K562 (cell line): ENCODE measurements at regions of chr1 and their contacts with region 1.

Region 1: GRCh38 chr1:36187800-36188593 is 32.0 kb downstream of the MAP7D1 start:
- DNase-seq: peak; percentile 75 to 90 (median 82)
- ATAC-seq: peak; percentile 98
- H3K4me3 ChIP-seq: no peak overlapping the region
- H3K27ac ChIP-seq: peak overlapping the region; percentile 6; the same call in 1 of the 3 replicates
- H3K4me1 ChIP-seq: peaks cover 5 to 6% of the 10 kb centered on the region in 2 experiments; a peak in 3 of 5 replicates
- H3K27me3 ChIP-seq: no peaks in the 10 kb centered on the region
- CTCF ChIP-seq: peak; percentile 95 to 97 (median 97)
- EP300 ChIP-seq: no peak; the same call in 1 of the 2 replicates
- POLR2A ChIP-seq: no peak
- RAD21 ChIP-seq: peak; percentile 97 to 99

Region 2: DNA sequence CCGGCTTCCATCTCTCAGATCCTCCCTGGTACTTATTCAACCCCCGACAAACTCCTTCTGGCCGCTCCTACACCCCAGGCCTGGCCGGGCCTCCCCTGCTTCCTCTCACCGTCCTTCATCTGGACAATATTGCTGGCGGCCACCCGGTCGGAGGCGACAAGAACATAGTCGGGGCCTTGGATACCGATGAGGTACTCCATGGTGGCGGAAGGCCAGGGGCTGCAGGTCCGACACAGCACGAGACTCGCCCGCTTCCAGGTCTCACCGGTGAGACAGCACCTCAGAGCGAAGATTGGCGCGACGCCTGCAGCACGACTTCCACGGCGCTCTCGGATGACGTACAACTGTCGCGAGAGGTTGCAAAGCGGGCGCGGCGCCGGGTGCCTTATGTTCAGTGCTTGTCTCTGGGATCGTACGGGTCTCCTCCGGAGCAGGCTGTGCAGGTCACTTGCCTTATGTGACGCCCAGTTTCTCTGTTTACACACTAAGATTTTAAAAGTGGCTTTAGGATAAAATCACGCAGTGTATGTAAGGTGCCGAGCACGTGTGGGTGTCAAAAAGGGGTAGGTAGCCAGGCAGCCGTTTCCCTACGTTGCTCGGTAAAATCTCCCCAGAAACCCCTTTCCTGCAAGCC is 546.6 kb before region 1 on chr1 and contains the start of gene PSMB2:
- CTCF ChIA-PET with region 1: no interaction called
- POLR2A ChIA-PET with region 1: no interaction called
- in situ Hi-C with region 1: no loop called
- intact Hi-C with region 1: no loop called
- DNase-seq: peak; percentile 91 to 100 (median 92)
- ATAC-seq: peak; percentile 84
- H3K4me3 ChIP-seq: peak within 1 kb of the TSS; percentile 72
- H3K27ac ChIP-seq: peak within 1 kb of the TSS; percentile 94
- H3K4me1 ChIP-seq: peaks cover 0 to 7% of the 10 kb centered on the region in 2 experiments; a peak in 1 of 5 replicates
- H3K27me3 ChIP-seq: 0 out of 5 replicates have a peak, but pooled peaks cover 0 to 6% of the 10 kb centered on the region in 2 experiments
- CTCF ChIP-seq: peak in 1 of 3 experiments; percentile 14; a peak in 1 of 6 replicates
- EP300 ChIP-seq: peak; percentile 56; the same call in 1 of the 2 replicates
- POLR2A ChIP-seq: peak; percentile 98
- RAD21 ChIP-seq: no peak
- polyA plus RNA-seq, gene PSMB2: 499 to 543 TPM

Region 3: GRCh38 chr1:36088575-36089443 is 99.2 kb before region 1 on chr1 and contains the start of gene ADPRS:
- CTCF ChIA-PET with region 1: no interaction called
- POLR2A ChIA-PET with region 1: interaction called, 4 read pairs
- in situ Hi-C with region 1: loop called (anchors 5 kb)
- intact Hi-C with region 1: no loop called
- DNase-seq: peak; percentile 95 to 97 (median 96)
- ATAC-seq: peak; percentile 94
- H3K4me3 ChIP-seq: peak within 1 kb of the TSS; percentile 92
- H3K27ac ChIP-seq: peak within 1 kb of the TSS; percentile 70
- H3K4me1 ChIP-seq: peaks cover 18 to 40% of the 10 kb centered on the region in 2 experiments; a peak in 4 of 5 replicates
- H3K27me3 ChIP-seq: no peaks in the 10 kb centered on the region
- CTCF ChIP-seq: peak; percentile 97 to 99 (median 98)
- EP300 ChIP-seq: peak; percentile 56
- POLR2A ChIP-seq: peak; percentile 98
- RAD21 ChIP-seq: peak; percentile 40 to 63; a peak in 3 of 4 replicates
- polyA plus RNA-seq, gene ADPRS: 5.9 to 8.4 TPM

Region 4: GRCh38 chr1:36099681-36100341 is 88.2 kb before region 1 on chr1:
- CTCF ChIA-PET with region 1: interaction called, 64 read pairs
- POLR2A ChIA-PET with region 1: interaction called, 3 read pairs
- in situ Hi-C with region 1: no loop called
- intact Hi-C with region 1: loop called (anchors 1 kb)
- DNase-seq: peak; percentile 87 to 91 (median 88)
- ATAC-seq: peak; percentile 96
- H3K4me3 ChIP-seq: peak overlapping the region; percentile 20; the same call in 1 of the 2 replicates
- H3K27ac ChIP-seq: no peak overlapping the region; the same call in 2 of the 3 replicates
- H3K4me1 ChIP-seq: peaks cover 0 to 36% of the 10 kb centered on the region in 2 experiments; a peak in 3 of 5 replicates
- H3K27me3 ChIP-seq: no peaks in the 10 kb centered on the region
- CTCF ChIP-seq: peak; percentile 94 to 95 (median 95)
- EP300 ChIP-seq: no peak
- POLR2A ChIP-seq: no peak
- RAD21 ChIP-seq: peak; percentile 95

Region 5: GRCh38 chr1:36149237-36149972 is 38.6 kb before region 1 on chr1 and contains the start of gene TRAPPC3:
- CTCF ChIA-PET with region 1: interaction called, 36 read pairs
- POLR2A ChIA-PET with region 1: interaction called, 13 read pairs
- in situ Hi-C with region 1: no loop called
- intact Hi-C with region 1: loop called (anchors 1 kb)
- DNase-seq: peak; percentile 98 to 100 (median 99)
- ATAC-seq: peak; percentile 95
- H3K4me3 ChIP-seq: peak within 1 kb of the TSS; percentile 69
- H3K27ac ChIP-seq: peak within 1 kb of the TSS; percentile 87
- H3K4me1 ChIP-seq: peaks cover 31 to 34% of the 10 kb centered on the region in 2 experiments
- H3K27me3 ChIP-seq: no peaks in the 10 kb centered on the region
- CTCF ChIP-seq: peak; percentile 97 to 99 (median 99)
- EP300 ChIP-seq: peak; percentile 43; the same call in 1 of the 2 replicates
- POLR2A ChIP-seq: peak; percentile 95
- RAD21 ChIP-seq: peak; percentile 99 to 100
- polyA plus RNA-seq, gene TRAPPC3: 20.6 to 41.8 TPM

Region 6: GRCh38 chr1:36160949-36161485 is 27.0 kb before region 1 on chr1:
- CTCF ChIA-PET with region 1: interaction called, 3 read pairs
- POLR2A ChIA-PET with region 1: interaction called, 16 read pairs
- in situ Hi-C with region 1: no loop called
- intact Hi-C with region 1: loop called (anchors 1 kb)
- DNase-seq: peak; percentile 65 to 72 (median 72)
- ATAC-seq: peak; percentile 64
- H3K4me3 ChIP-seq: peak overlapping the region; percentile 37
- H3K27ac ChIP-seq: peak overlapping the region; percentile 76
- H3K4me1 ChIP-seq: peaks cover 42 to 55% of the 10 kb centered on the region in 2 experiments
- H3K27me3 ChIP-seq: no peaks in the 10 kb centered on the region
- CTCF ChIP-seq: peak; percentile 60 to 76 (median 63)
- EP300 ChIP-seq: 0 out of 2 replicates have a peak, but pooled peaks have one; percentile 17
- POLR2A ChIP-seq: peak; percentile 70
- RAD21 ChIP-seq: peak; percentile 13 to 48; a peak in 3 of 4 replicates

Region 7: GRCh38 chr1:36285448-36286101 is 97.6 kb after region 1 on chr1:
- CTCF ChIA-PET with region 1: interaction called, 14 read pairs
- POLR2A ChIA-PET with region 1: interaction called, 4 read pairs
- in situ Hi-C with region 1: no loop called
- intact Hi-C with region 1: loop called (anchors 1 kb)
- DNase-seq: peak; percentile 77 to 93 (median 80)
- ATAC-seq: peak; percentile 95
- H3K4me3 ChIP-seq: no peak overlapping the region
- H3K27ac ChIP-seq: no peak overlapping the region
- H3K4me1 ChIP-seq: no peaks in the 10 kb centered on the region
- H3K27me3 ChIP-seq: no peaks in the 10 kb centered on the region
- CTCF ChIP-seq: peak; percentile 77 to 91 (median 81)
- EP300 ChIP-seq: no peak
- POLR2A ChIP-seq: no peak
- RAD21 ChIP-seq: peak; percentile 88 to 93